Colonic mucosa (tissue), 4 donors: ENCODE measurements at regions of chr17 and their contacts with region 1.

Region 1: GRCh38 chr17:12673788-12674187 is 8.1 kb downstream of the MYOCD start:
- DNase-seq: no peak
- H3K4me3 ChIP-seq: no peak overlapping the region
- H3K27ac ChIP-seq: no peak overlapping the region
- H3K4me1 ChIP-seq: no peaks in the 10 kb centered on the region
- H3K27me3 ChIP-seq: no peaks in the 10 kb centered on the region
- CTCF ChIP-seq: no peak

Region 2: DNA sequence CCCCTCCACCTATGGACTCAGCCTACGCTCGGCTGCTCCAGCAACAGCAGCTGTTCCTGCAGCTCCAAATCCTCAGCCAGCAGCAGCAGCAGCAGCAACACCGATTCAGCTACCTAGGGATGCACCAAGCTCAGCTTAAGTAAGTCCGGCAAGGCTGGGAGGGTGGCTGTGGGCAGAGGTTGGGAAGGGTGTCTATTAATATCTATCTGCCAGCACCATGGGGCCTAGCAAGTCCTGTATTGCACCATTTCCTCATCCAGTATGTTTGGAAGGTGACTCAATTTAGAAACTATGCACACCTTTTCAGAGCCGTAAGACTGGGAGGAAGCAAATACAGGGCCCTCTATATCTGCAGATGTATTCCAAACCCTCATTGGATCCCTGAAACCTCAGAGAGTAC is 70.5 kb after region 1 on chr17:
- intact Hi-C with region 1: loop called (anchors 5 kb)
- DNase-seq: peak; percentile 17
- H3K4me3 ChIP-seq: no peak overlapping the region
- H3K27ac ChIP-seq: no peak overlapping the region
- H3K4me1 ChIP-seq: peaks cover 4% of the 10 kb centered on the region
- H3K27me3 ChIP-seq: no peaks in the 10 kb centered on the region
- CTCF ChIP-seq: no peak

Region 3: DNA sequence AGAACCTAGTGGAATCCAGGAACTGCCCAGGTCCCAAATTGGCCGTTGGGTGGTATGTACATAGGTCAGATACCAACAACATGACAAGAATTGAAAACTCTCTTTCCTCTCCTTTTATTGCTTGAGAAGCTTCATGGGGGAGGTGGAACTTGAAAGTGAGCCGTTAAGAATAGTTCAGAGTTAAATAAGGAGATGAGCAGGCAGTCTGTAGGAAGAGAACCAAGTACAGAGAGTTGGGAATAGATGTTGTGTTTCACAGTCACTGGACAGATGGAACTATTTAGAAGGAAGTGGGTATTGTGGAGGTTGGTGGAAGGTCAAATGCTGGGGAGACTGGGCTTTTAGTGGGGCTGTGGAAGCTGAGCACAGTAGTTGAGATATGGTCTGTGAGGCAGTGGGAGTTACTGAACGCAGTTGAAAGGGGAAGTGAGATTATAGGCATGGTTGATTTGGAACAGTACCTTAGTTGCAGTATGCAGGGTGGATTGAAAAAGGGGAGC is 141.9 kb after region 1 on chr17:
- intact Hi-C with region 1: no loop called
- DNase-seq: no peak
- H3K4me3 ChIP-seq: no peak overlapping the region
- H3K27ac ChIP-seq: peak overlapping the region; percentile 31
- H3K4me1 ChIP-seq: no peaks in the 10 kb centered on the region
- H3K27me3 ChIP-seq: no peaks in the 10 kb centered on the region
- CTCF ChIP-seq: no peak